Endothelial cell of umbilical vein (primary cell): ENCODE measurements at regions of chr7 and their contacts with region 1.

Region 1: GRCh38 chr7:35985126-35985754 is 167.8 kb upstream of the EEPD1 start:
- DNase-seq: peak; percentile 67
- H3K4me3 ChIP-seq: no peak overlapping the region
- H3K27ac ChIP-seq: no peak overlapping the region
- H3K4me1 ChIP-seq: no peaks in the 10 kb centered on the region
- H3K27me3 ChIP-seq: no peaks in the 10 kb centered on the region
- CTCF ChIP-seq: peak; percentile 87 to 90
- POLR2A ChIP-seq: no peak

Region 2: GRCh38 chr7:36057323-36057722 is 72.1 kb after region 1 on chr7:
- CTCF ChIA-PET with region 1: no interaction called
- POLR2A ChIA-PET with region 1: no interaction called
- dilution Hi-C with region 1: no loop called
- intact Hi-C with region 1: no loop called
- DNase-seq: no peak
- H3K4me3 ChIP-seq: no peak overlapping the region
- H3K27ac ChIP-seq: no peak overlapping the region
- H3K4me1 ChIP-seq: peaks cover 4% of the 10 kb centered on the region
- H3K27me3 ChIP-seq: peaks cover 2 to 5% of the 10 kb centered on the region in 2 experiments
- CTCF ChIP-seq: no peak
- POLR2A ChIP-seq: no peak

Region 3: GRCh38 chr7:36084475-36085097 is 99.3 kb after region 1 on chr7:
- CTCF ChIA-PET with region 1: interaction called, 3 read pairs
- POLR2A ChIA-PET with region 1: no interaction called
- dilution Hi-C with region 1: no loop called
- intact Hi-C with region 1: loop called (anchors 5 kb)
- DNase-seq: no peak
- H3K4me3 ChIP-seq: no peak overlapping the region
- H3K27ac ChIP-seq: no peak overlapping the region
- H3K4me1 ChIP-seq: no peaks in the 10 kb centered on the region
- H3K27me3 ChIP-seq: peaks cover 0 to 5% of the 10 kb centered on the region in 2 experiments
- CTCF ChIP-seq: no peak
- POLR2A ChIP-seq: no peak

Region 4: DNA sequence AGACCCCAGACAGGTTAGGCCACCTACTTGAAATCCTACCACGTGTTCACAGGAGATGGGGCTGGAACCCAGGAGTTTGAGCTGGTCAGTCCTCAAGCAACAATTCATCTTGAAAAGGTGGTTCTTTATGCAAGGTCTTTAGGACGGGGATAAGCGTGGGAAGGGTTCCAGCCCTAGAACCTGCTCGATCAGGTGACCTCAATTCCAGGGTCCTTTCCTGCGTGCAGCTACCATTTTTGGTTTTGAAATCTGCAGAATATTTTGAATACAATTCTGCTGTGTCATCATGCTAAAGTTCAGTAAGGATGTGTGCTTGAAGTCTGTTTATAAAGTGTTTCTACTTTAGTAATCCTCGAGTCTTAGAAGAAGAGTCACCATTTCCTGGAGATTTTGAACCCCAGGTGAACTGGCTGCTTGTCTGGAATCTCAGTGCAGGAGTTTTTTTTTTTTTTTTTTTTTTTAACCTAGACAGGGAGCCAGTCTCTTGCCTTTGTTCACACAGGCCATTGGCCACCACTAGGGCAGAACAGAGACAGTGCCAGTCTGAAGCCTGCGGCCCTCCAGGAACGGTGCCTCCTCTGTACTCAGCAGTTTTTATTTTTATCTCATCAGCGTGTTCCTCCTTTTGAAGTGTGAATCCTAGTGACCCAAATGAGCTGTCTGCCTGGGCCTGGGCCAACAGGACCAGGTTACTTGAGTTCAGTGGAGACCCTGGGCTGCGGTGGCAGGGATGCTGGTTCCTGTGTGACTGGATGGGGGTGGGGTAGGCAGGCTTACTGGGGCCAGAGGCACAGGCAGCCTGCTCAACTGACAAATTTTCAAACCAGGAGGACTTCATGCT is 222.4 kb after region 1 on chr7:
- CTCF ChIA-PET with region 1: interaction called, 3 read pairs
- POLR2A ChIA-PET with region 1: no interaction called
- dilution Hi-C with region 1: no loop called
- intact Hi-C with region 1: loop called (anchors 10 kb)
- DNase-seq: no peak
- H3K4me3 ChIP-seq: no peak overlapping the region
- H3K27ac ChIP-seq: no peak overlapping the region
- H3K4me1 ChIP-seq: no peaks in the 10 kb centered on the region
- H3K27me3 ChIP-seq: peaks cover 0 to 4% of the 10 kb centered on the region in 2 experiments
- CTCF ChIP-seq: no peak
- POLR2A ChIP-seq: no peak

Region 5: GRCh38 chr7:36526863-36527548 is 541.8 kb after region 1 on chr7:
- CTCF ChIA-PET with region 1: no interaction called
- POLR2A ChIA-PET with region 1: no interaction called
- dilution Hi-C with region 1: no loop called
- intact Hi-C with region 1: no loop called
- DNase-seq: peak; percentile 29
- H3K4me3 ChIP-seq: no peak overlapping the region
- H3K27ac ChIP-seq: no peak overlapping the region
- H3K4me1 ChIP-seq: peaks cover 11% of the 10 kb centered on the region
- H3K27me3 ChIP-seq: peaks cover 0 to 3% of the 10 kb centered on the region in 2 experiments
- CTCF ChIP-seq: no peak
- POLR2A ChIP-seq: no peak